Dorsolateral prefrontal cortex (tissue), 120 donors: ENCODE measurements at regions of chr20 and their contacts with region 1.

Region 1: DNA sequence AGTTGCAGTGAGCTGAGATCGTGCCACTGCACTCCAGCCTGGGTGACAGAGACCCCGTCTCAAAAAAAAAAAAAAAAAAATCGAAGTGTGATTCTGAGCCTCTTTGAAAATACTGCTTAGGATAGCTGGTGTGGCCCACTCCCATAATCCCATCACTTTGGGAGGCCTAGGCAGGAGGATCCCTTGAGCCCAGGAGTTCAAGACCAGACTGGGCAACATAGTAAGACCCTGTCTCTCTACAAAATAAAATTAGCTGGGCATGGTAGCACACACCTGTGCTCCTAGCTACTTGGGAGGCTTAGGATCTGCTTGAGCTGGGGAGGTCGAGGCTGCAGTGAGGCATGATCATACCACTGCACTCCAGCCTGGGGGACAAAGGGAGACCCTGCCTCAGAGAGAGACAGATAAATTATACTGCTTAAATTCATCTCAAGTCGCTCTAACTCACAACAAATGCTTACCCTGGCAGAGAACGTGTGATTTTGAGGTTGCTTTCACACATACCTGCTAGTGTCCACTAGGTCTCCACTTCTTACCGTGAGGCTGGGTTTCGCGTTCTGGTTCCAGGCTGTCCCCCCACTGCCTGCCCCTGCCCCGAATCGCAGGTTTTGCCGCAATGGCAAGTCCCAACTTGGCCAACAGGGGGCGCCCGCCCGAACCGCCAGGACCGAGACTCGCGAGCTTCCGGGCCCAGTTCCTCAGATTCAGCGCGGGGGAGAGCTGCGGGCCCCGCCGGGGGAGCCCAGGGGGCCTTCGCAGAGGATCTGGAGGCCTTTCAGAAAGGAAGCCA is 12.3 kb upstream of the TMC2 start:
- DNase-seq: peak; percentile 79 to 94 (median 89)
- H3K4me3 ChIP-seq: peak overlapping the region; percentile 64 to 98 (median 82)
- H3K27ac ChIP-seq: peak overlapping the region; percentile 58 to 97 (median 89)
- H3K27me3 ChIP-seq: no peaks in the 10 kb centered on the region
- CTCF ChIP-seq: peak; percentile 83 to 100 (median 96)

Region 2: DNA sequence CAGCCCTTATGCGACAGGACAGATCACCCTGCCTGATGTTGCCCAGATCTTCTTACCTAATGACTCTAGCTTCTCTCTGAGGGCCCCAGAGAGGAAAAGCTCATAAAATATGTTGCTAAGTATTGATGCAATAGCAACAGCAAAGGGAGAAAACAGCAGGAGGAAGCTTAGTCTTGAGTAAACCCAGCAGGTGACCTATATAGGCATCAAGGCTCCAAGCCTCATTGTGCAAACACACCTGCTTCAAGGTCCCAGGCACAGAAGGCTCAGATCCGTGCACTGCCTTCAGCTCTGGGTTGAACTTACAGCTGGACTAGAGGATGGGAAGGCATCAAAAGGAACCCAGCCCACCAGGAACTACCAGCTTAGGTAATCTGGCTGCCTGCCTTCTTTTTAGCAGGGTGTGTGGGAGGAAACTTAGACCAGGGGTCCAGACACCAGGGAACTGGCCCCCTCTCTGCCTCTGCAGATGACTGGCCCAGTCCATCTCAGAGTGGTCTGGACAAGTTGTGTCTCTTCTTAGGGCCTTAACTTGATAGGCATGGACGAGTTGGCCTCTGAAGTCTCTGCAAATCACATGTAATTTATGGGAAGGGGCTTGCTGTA is 193.9 kb before region 1 on chr20:
- intact Hi-C with region 1: no loop called
- DNase-seq: no peak
- H3K4me3 ChIP-seq: no peak overlapping the region
- H3K27ac ChIP-seq: no peak overlapping the region
- H3K27me3 ChIP-seq: peaks cover 0 to 3% (median 0%) of the 10 kb centered on the region in 45 donors
- CTCF ChIP-seq: no peak

Region 3: DNA sequence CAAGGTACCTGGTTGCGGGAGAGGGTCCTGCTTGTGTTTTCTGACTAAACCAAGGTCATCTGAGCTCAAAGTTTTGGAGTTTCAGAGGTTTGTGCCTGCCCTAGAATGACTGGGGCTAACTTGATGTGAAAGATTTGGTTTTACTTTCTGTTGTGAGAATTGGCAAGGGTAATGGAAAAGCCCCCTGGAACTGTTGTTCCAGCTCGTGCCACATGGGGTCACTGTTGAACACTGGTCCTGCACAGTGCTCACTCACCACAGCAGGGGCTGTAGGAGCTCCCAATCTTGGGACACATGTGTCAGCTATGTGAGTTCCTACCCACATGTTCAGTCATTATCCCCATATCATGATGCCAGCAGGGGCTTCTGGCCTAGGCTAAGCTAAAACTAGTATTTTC is 136.9 kb before region 1 on chr20:
- intact Hi-C with region 1: no loop called
- DNase-seq: no peak
- H3K4me3 ChIP-seq: no peak overlapping the region
- H3K27ac ChIP-seq: peak overlapping the region in 6 of 59 donors; percentile 1 to 52 (median 30)
- H3K27me3 ChIP-seq: peaks cover 0 to 4% (median 0%) of the 10 kb centered on the region in 45 donors
- CTCF ChIP-seq: peak in 23 of 56 donors; percentile 9 to 47 (median 25)

Region 4: GRCh38 chr20:2643708-2644107 is 119.6 kb after region 1 on chr20:
- intact Hi-C with region 1: loop called in 1 of 2 experiments (anchors 1 kb)
- DNase-seq: no peak
- H3K4me3 ChIP-seq: no peak overlapping the region
- H3K27ac ChIP-seq: no peak overlapping the region
- H3K27me3 ChIP-seq: no peaks in the 10 kb centered on the region
- CTCF ChIP-seq: no peak

Region 5: GRCh38 chr20:2651772-2652723 is 127.9 kb after region 1 on chr20 and contains the start of gene NOP56:
- intact Hi-C with region 1: loop called in 1 of 2 experiments (anchors 1 kb)
- DNase-seq: peak; percentile 83 to 97 (median 90)
- H3K4me3 ChIP-seq: peak within 1 kb of the TSS; percentile 65 to 100 (median 95)
- H3K27ac ChIP-seq: peak within 1 kb of the TSS; percentile 73 to 99 (median 96)
- H3K27me3 ChIP-seq: no peaks in the 10 kb centered on the region
- CTCF ChIP-seq: peak in 22 of 56 donors; percentile 1 to 51 (median 14)
- total RNA-seq, gene NOP56: 70.3 to 199 (median 141) TPM